Dendritic cell treated with granulocyte-macrophage colony-stimulating factor and Interleukin-4, amounts not matched to agents 40 ng/mL and 50 ng/mL, for 4 days (primary cell): ENCODE measurements at regions of chr16 and their contacts with region 1.

Region 1: DNA sequence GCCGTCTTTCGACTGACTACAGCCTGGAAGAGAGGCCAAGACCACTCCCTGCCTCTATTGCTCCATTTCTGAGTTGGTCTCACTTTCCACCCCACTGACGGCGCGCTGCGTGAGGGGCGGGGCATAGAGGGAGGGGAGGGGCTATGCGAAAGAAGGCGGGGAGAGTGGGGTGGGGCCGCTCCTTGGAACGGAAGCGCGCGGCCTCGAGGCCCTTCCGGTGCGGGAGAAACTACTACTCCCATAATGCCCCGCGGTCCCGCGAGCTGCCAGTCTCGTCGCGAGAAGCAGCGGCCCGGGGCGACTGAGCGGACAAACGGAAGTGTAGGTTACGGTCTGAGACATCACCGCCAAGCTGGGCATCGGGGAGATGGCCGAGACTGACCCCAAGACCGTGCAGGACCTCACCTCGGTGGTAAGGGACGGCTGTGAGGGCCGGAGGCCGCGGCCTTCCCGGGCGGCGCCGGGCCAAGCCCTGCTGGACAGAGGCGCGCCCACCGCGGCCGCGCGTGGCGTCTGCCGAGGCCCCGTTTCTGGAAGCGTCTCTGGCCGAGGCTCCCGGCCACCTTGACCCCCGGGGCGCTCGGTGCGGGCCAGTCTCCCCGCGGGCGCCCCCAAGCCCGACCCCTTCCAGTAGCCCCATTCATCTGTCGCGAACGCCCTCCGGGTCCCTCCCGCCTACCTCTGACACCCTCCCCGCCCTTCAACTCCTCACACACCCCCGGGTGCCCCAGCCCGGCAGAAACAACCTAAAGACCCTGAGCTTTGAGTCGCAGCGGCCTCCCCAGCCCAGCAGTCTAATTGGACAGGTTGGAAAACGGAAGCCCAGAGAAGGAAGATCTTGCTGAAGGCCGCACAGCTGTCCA is at the start of gene HSBP1:
- H3K4me3 Mint-ChIP-seq: peak within 1 kb of the TSS; percentile 98
- H3K27ac Mint-ChIP-seq: peak within 1 kb of the TSS; percentile 98
- H3K4me1 Mint-ChIP-seq: peaks cover 63% of the 10 kb centered on the region
- H3K27me3 Mint-ChIP-seq: no peaks in the 10 kb centered on the region

Region 2: DNA sequence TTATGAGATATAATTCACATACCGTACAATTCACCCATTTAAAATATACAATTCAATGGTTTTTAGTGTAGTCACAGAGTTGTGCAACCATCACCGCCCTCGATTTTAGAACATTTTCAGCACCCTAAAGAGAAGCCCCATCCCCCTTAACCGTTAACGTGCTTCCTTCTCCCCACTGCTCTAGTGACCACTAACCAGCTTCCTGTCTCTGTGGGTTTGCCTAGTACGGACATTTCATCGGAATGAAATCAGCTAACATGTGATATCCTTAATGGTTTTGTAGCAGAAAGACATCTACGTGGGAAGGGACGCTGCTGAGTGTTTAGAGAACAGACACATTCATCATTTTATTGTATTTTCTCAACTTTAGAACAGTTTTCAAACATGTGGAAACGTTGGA is 80.9 kb before region 1 on chr16:
- intact Hi-C with region 1: no loop called
- H3K4me3 Mint-ChIP-seq: peak overlapping the region; percentile 6
- H3K27ac Mint-ChIP-seq: peak overlapping the region; percentile 40
- H3K4me1 Mint-ChIP-seq: peaks cover 16% of the 10 kb centered on the region
- H3K27me3 Mint-ChIP-seq: no peaks in the 10 kb centered on the region

Region 3: GRCh38 chr16:83771306-83771942 is 36.5 kb before region 1 on chr16:
- intact Hi-C with region 1: loop called (anchors 5 kb)
- H3K4me3 Mint-ChIP-seq: no peak overlapping the region
- H3K27ac Mint-ChIP-seq: no peak overlapping the region
- H3K4me1 Mint-ChIP-seq: peaks cover 46% of the 10 kb centered on the region
- H3K27me3 Mint-ChIP-seq: peaks cover 3% of the 10 kb centered on the region

Region 4: GRCh38 chr16:83785455-83785854 is 22.5 kb before region 1 on chr16:
- intact Hi-C with region 1: no loop called
- H3K4me3 Mint-ChIP-seq: no peak overlapping the region
- H3K27ac Mint-ChIP-seq: no peak overlapping the region
- H3K4me1 Mint-ChIP-seq: peaks cover 25% of the 10 kb centered on the region
- H3K27me3 Mint-ChIP-seq: peaks cover 17% of the 10 kb centered on the region

Region 5: DNA sequence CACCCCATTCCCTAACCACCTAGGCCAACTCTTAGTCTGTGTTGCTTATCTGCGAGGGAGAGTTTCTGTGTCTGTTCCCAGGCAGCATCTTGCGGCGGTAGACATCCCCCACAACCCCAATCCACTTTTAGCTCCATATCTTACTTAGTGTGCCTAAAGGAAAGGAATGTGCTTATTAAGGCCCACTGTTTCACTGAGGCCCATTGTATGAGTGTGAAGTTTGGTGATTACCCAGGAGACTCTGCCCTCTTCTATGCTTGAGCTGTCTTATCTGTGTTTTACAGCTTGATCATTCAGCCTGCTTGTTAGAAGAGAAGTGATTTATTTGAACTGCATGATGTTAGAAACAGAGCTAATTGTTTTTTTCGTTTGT is 80.7 kb after region 1 on chr16:
- intact Hi-C with region 1: no loop called
- H3K4me3 Mint-ChIP-seq: no peak overlapping the region
- H3K27ac Mint-ChIP-seq: no peak overlapping the region
- H3K4me1 Mint-ChIP-seq: no peaks in the 10 kb centered on the region
- H3K27me3 Mint-ChIP-seq: peaks cover 10% of the 10 kb centered on the region

Region 6: GRCh38 chr16:83898463-83899271 is 90.7 kb after region 1 on chr16 and contains the start of gene MLYCD:
- intact Hi-C with region 1: loop called (anchors 5 kb)
- H3K4me3 Mint-ChIP-seq: peak within 1 kb of the TSS; percentile 89
- H3K27ac Mint-ChIP-seq: peak within 1 kb of the TSS; percentile 85
- H3K4me1 Mint-ChIP-seq: peaks cover 28% of the 10 kb centered on the region
- H3K27me3 Mint-ChIP-seq: peaks cover 12% of the 10 kb centered on the region